AG04450 (cell line): ENCODE measurements at regions of chr3 and their contacts with region 1.

Region 1: GRCh38 chr3:112013058-112013783 is 14.5 kb downstream of the TAGLN3 start:
- DNase-seq: peak; percentile 55
- H3K4me3 ChIP-seq: no peak overlapping the region
- H3K27ac ChIP-seq: no peak overlapping the region
- H3K27me3 ChIP-seq: no peaks in the 10 kb centered on the region
- CTCF ChIP-seq: peak; percentile 82

Region 2: DNA sequence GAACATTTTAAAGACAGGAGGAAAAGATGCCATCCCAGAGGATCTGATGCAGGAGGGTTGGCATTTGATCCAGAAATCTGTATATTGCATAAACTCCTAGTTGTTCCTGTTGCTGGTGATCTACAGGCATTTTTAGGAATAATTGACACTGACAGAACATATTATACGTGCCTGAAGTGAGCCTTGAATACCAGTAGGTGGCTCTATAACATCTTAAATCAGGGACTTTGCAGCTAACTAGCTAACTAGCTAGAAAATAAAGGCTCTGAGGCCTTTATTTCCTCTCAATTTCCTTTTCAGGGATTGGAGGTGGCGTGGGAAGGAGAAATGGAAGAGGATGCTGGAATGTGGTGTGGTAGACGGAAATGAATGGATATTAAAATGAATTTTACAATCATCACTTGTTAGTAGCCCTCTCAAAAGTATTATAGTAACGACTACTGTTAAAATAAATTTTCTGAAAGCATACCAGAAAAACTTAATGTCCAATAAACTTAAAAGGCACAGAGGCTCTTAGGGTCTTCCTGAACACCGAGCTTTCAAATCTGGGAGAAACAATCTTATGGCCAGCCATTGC is 344.2 kb before region 1 on chr3:
- CTCF ChIA-PET with region 1: interaction called, 51 read pairs
- POLR2A ChIA-PET with region 1: no interaction called
- DNase-seq: peak; percentile 37
- H3K4me3 ChIP-seq: no peak overlapping the region
- H3K27ac ChIP-seq: no peak overlapping the region
- H3K27me3 ChIP-seq: no peaks in the 10 kb centered on the region
- CTCF ChIP-seq: peak; percentile 76

Region 3: GRCh38 chr3:111859974-111860859 is 153.0 kb before region 1 on chr3:
- CTCF ChIA-PET with region 1: interaction called, 12 read pairs
- POLR2A ChIA-PET with region 1: no interaction called
- DNase-seq: no peak
- H3K4me3 ChIP-seq: peak overlapping the region; percentile 78
- H3K27ac ChIP-seq: peak overlapping the region; percentile 95
- H3K27me3 ChIP-seq: no peaks in the 10 kb centered on the region
- CTCF ChIP-seq: peak; percentile 61

Region 4: DNA sequence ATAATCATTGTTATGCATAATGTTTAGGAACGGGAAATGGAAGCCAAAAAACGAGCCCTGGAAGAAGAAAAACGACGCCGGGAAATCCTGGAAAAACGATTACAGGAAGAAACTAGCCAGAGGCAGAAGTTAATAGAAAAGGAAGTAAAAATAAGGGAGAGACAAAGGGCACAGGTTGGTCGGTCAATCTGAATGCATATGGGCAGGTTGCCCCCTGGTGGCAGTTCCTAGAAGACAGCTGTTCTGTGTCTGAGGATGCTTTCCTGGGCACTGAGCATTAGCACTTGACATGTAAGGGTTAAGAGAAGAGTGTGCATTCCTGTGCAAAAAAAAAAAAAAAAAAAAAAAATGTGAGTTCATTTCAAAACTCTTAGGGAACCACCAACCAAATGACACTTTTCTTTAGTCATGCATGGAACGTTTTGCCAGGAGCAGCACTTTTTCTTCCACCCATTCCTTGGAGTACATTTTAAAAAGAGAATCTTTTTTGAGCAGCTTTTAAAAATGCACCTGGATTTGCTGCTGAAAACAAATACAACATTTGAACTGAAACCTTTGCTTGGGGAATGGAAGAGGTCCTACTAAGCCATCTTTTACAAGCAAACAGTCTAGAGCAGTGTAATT is 45.5 kb before region 1 on chr3:
- CTCF ChIA-PET with region 1: interaction called, 12 read pairs
- POLR2A ChIA-PET with region 1: interaction called, 4 read pairs
- DNase-seq: peak; percentile 59
- H3K4me3 ChIP-seq: no peak overlapping the region
- H3K27ac ChIP-seq: no peak overlapping the region
- H3K27me3 ChIP-seq: no peaks in the 10 kb centered on the region
- CTCF ChIP-seq: peak; percentile 92

Region 5: DNA sequence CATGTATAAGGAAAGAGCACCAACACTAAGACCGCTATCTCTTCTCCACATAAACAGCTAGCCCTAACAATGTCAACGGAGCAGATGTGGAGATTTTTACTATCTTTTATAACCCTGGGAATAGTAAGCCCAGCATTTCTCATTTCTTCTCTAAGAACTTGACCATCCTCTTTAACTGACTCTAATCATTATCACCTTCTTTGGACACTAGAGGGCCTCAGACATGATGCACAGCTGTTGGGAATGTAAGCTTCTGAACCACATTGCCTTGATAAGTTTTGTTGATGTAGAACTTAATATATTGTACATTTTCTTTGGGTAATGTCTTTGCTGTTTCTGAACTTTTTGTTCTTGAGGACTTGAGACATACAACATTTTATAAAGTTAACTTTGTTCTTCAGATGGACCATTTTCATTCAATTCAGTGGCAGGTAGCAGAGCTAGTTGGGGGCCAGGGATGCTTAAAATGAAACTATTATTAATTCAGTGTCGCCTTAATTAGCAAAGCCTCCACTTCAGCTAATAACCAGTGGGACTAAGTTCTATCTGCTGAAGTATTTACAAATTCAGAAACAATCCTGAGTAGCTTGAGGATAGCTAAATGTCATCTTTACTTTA is 24.1 kb before region 1 on chr3:
- CTCF ChIA-PET with region 1: interaction called, 169 read pairs
- POLR2A ChIA-PET with region 1: no interaction called
- DNase-seq: peak; percentile 32
- H3K4me3 ChIP-seq: no peak overlapping the region
- H3K27ac ChIP-seq: no peak overlapping the region
- H3K27me3 ChIP-seq: no peaks in the 10 kb centered on the region
- CTCF ChIP-seq: peak; percentile 83

Region 6: GRCh38 chr3:112032098-112032731 is 19.0 kb after region 1 on chr3:
- CTCF ChIA-PET with region 1: interaction called, 17 read pairs
- POLR2A ChIA-PET with region 1: no interaction called
- DNase-seq: no peak
- H3K4me3 ChIP-seq: no peak overlapping the region
- H3K27ac ChIP-seq: no peak overlapping the region
- H3K27me3 ChIP-seq: no peaks in the 10 kb centered on the region
- CTCF ChIP-seq: no peak

Region 7: DNA sequence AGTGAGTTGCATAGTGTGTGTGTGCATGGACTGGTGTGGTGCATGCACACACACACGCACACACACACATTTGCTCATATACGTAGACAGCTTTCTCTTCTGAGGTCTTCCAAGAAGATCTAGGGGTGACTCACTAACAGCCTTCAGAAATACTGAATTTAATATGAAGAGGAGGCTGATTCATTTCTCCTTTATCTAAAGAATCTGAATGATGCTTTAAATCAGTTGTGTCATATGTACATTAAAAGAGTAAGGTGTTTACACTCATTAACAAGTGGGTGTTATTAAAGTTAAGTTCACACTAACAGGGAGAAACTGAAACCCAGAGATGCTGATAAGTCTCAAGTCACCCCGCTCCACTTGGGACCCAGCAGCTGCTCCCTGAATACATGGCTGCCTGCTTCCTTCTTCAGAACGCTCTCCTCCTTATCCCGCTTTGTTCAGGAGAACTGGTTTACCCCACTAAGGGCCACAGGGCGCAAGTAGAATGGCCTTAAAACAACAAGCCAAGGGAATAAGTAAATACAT is 43.3 kb after region 1 on chr3:
- CTCF ChIA-PET with region 1: interaction called, 10 read pairs
- POLR2A ChIA-PET with region 1: no interaction called
- DNase-seq: peak; percentile 30
- H3K4me3 ChIP-seq: no peak overlapping the region
- H3K27ac ChIP-seq: no peak overlapping the region
- H3K27me3 ChIP-seq: no peaks in the 10 kb centered on the region
- CTCF ChIP-seq: no peak